Cardiac septum (tissue), 1 donor: ENCODE measurements at regions of chr9 and their contacts with region 1.

Region 1: GRCh38 chr9:133417541-133418461 is at the start of gene REXO4:
- DNase-seq: peak; percentile 86
- total RNA-seq, gene REXO4: 12.2 TPM

Region 2: GRCh38 chr9:133335878-133336811 is 81.7 kb before region 1 on chr9 and contains the start of gene SURF6:
- intact Hi-C with region 1: loop called (anchors 5 kb)
- DNase-seq: peak; percentile 95
- total RNA-seq, gene SURF6: 14.2 TPM

Region 3: GRCh38 chr9:133375724-133376654 is 41.8 kb before region 1 on chr9 and contains the starts of genes STKLD1 and SURF4:
- intact Hi-C with region 1: loop called (anchors 5 kb)
- DNase-seq: peak; percentile 98
- total RNA-seq, gene STKLD1: 0.62 TPM
- total RNA-seq, gene SURF4: 80.2 TPM

Region 4: GRCh38 chr9:133387425-133388079 is 30.2 kb before region 1 on chr9:
- intact Hi-C with region 1: no loop called
- DNase-seq: no peak

Region 5: DNA sequence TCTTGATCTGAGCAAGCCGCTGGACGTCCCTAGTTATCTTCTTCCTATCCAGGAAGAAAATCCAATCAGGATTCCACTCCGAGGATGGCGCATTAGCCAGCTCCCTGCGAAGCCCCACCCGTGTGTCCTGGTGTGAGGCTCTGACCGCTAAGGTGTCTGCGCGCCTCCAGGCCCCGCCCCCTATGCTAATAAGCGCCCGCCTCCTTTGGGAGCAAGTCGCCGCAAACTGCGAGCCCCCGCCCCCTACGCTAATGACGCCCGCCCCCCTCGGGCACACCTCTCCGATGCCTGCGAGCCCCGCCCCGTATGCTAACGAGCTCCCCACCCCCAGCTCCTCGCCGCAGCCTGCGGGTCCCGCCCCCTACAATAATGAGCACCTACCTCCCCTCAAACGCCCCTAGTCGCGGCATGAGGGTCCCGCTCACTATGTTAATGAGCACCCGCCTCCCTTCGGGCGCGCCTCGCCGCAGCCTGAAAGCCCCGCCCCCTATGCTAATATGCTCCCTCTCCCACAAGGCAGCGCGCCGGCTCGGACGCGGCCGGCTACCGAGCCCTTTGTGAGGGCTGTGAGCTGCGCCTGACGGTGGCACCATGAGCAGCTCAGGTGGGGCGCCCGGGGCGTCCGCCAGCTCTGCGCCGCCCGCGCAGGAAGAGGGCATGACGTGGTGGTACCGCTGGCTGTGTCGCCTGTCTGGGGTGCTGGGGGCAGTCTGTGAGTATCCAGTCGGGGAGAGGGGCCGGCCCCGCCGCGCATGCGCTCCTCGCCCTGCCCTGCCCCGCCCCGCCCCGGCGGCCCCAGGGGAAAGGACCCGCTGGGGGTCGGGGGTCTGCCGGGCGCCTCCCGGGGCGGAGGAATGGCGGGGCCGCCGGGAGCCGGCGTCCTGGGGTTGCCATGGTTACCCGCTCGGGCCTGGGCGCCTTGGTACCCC is 41.9 kb after region 1 on chr9 and contains the start of gene CACFD1:
- intact Hi-C with region 1: loop called (anchors 5 kb)
- DNase-seq: peak; percentile 98
- total RNA-seq, gene CACFD1: 15.0 TPM

Region 6: GRCh38 chr9:133478851-133479711 is 61.3 kb after region 1 on chr9 and contains the start of gene SLC2A6:
- intact Hi-C with region 1: loop called (anchors 5 kb)
- DNase-seq: peak; percentile 90
- total RNA-seq, gene SLC2A6: 3.6 TPM